A673 (cell line): ENCODE measurements at regions of chrX and their contacts with region 1.

Region 1: GRCh38 chrX:79444694-79445210 is 77.6 kb upstream of the ITM2A start:
- DNase-seq: no peak
- H3K4me3 ChIP-seq: no peak overlapping the region
- H3K27ac ChIP-seq: no peak overlapping the region
- H3K4me1 ChIP-seq: peaks cover 4% of the 10 kb centered on the region
- H3K27me3 ChIP-seq: no peaks in the 10 kb centered on the region
- CTCF ChIP-seq: no peak

Region 2: DNA sequence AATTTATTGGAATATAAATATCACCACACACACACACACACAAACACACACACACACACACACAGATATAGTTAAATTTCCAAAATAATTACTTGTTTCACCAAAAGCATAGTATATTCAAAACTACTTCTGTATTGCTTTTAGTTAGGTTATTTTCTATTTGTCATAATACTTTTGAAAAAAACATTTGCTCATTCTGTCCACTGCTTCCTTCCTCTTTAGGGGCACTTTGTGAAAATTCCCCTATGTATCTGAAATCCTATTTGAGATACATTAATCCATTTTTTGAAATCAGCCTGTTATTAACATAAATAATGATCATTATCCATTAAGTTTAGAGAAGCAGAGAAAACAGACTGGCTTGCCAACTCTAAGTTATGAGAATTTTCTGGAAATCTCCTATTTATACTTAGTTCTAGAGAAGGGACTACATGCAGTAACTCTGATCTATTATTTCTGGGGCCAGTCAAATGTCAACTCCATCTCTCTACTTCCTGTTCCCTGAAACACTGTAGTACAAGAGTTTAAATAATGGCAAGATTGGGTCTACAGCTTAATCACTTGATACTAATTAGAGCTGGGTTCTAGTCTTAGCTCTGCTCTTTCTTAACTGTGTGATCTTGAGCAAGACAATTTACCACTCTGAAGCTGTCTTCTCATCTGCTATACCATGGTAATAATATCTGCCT is 354.7 kb before region 1 on chrX:
- CTCF ChIA-PET with region 1: no interaction called
- POLR2A ChIA-PET with region 1: no interaction called
- intact Hi-C with region 1: loop called (anchors 5 kb)
- DNase-seq: no peak
- H3K4me3 ChIP-seq: no peak overlapping the region
- H3K27ac ChIP-seq: peak overlapping the region; percentile 99
- H3K4me1 ChIP-seq: peaks cover 29% of the 10 kb centered on the region
- H3K27me3 ChIP-seq: no peaks in the 10 kb centered on the region
- CTCF ChIP-seq: no peak

Region 3: GRCh38 chrX:79263550-79263949 is 181.2 kb before region 1 on chrX:
- CTCF ChIA-PET with region 1: no interaction called
- POLR2A ChIA-PET with region 1: no interaction called
- intact Hi-C with region 1: no loop called
- DNase-seq: no peak
- H3K4me3 ChIP-seq: no peak overlapping the region
- H3K27ac ChIP-seq: peak overlapping the region; percentile 60
- H3K4me1 ChIP-seq: peaks cover 59% of the 10 kb centered on the region
- H3K27me3 ChIP-seq: no peaks in the 10 kb centered on the region
- CTCF ChIP-seq: no peak